ENCODE measurements at regions of chr12 and their contacts with region 1.

Region 1: GRCh38 chr12:127145929-127146789 is 1120.8 kb upstream of the TMEM132C start:
- DNase-seq: peak; percentile 92 to 96 (median 94)
- ATAC-seq: peak; percentile 90
- H3K4me3 ChIP-seq: peak overlapping the region; percentile 73
- H3K27ac ChIP-seq: peak overlapping the region; percentile 95
- H3K4me1 ChIP-seq: peaks cover 10 to 18% of the 10 kb centered on the region in 2 experiments; a peak in 4 of 5 replicates
- H3K27me3 ChIP-seq: no peaks in the 10 kb centered on the region
- CTCF ChIP-seq: peak in 1 of 3 experiments; percentile 14; a peak in 1 of 6 replicates
- EP300 ChIP-seq: no peak
- POLR2A ChIP-seq: peak; percentile 90
- RAD21 ChIP-seq: no peak

Region 2: GRCh38 chr12:126811391-126811790 is 334.8 kb before region 1 on chr12:
- CTCF ChIA-PET with region 1: no interaction called
- POLR2A ChIA-PET with region 1: no interaction called
- in situ Hi-C with region 1: no loop called
- intact Hi-C with region 1: no loop called
- DNase-seq: no peak
- ATAC-seq: no peak
- H3K4me3 ChIP-seq: no peak overlapping the region
- H3K27ac ChIP-seq: no peak overlapping the region
- H3K4me1 ChIP-seq: no peaks in the 10 kb centered on the region; a peak in 1 of 5 replicates
- H3K27me3 ChIP-seq: peaks cover 2 to 9% of the 10 kb centered on the region in 2 experiments; a peak in 2 of 5 replicates
- CTCF ChIP-seq: no peak
- EP300 ChIP-seq: no peak
- POLR2A ChIP-seq: no peak
- RAD21 ChIP-seq: no peak

Region 3: GRCh38 chr12:127060310-127060847 is 85.8 kb before region 1 on chr12:
- CTCF ChIA-PET with region 1: interaction called, 7 read pairs
- POLR2A ChIA-PET with region 1: interaction called, 4 read pairs
- in situ Hi-C with region 1: no loop called
- intact Hi-C with region 1: loop called (anchors 10 kb)
- DNase-seq: peak; percentile 78 to 92 (median 79)
- ATAC-seq: peak; percentile 77
- H3K4me3 ChIP-seq: peak overlapping the region; percentile 65
- H3K27ac ChIP-seq: peak overlapping the region; percentile 79
- H3K4me1 ChIP-seq: peaks cover 7 to 12% of the 10 kb centered on the region in 2 experiments; a peak in 3 of 5 replicates
- H3K27me3 ChIP-seq: no peaks in the 10 kb centered on the region
- CTCF ChIP-seq: no peak
- EP300 ChIP-seq: no peak
- POLR2A ChIP-seq: peak; percentile 95
- RAD21 ChIP-seq: no peak